Dorsolateral prefrontal cortex (tissue), 120 donors: ENCODE measurements at regions of chr12 and their contacts with region 1.

Region 1: DNA sequence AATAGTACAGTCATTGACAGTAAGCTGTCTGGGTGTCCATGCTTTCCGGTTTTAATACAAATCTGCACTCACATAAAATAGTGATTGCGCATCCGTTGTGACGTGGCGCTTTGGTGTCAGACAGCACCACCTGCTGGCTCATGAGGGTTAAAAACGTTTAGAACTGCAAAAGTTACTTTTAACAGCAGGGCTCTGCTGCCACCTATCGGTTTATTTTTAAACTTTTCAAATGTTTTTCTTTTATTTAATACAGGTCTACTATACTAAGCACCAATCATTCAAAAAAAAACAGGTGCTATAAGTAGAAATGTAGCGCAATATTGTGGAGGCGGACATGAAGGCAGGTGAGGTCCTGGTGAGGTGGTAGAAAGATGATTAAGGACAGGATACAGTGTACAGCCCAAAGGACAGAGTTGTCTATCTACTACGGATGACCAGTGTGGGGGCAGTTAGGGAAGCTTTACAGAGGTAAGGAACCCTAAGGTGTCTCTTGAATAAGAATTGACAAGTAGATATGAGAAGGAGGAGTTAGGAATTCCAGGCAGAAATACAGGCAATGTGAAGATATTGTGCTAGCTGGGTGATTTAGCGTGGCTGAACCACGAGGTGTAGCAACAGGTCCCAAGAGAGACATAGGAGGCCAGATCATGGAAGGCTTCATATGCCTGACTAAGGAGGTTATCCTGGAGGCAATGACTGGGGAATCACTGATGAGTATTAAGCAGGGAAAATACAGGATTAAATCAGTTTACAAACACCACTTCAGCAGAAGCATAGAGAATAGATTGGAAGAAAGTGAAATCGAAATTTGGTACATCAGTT is 91.5 kb upstream of the PRB2 start:
- DNase-seq: peak; percentile 41 to 80 (median 66)
- H3K4me3 ChIP-seq: peak overlapping the region in 25 of 59 donors; percentile 1 to 50 (median 28)
- H3K27ac ChIP-seq: no peak overlapping the region
- H3K27me3 ChIP-seq: no peaks in the 10 kb centered on the region
- CTCF ChIP-seq: peak; percentile 94 to 100 (median 99)

Region 2: DNA sequence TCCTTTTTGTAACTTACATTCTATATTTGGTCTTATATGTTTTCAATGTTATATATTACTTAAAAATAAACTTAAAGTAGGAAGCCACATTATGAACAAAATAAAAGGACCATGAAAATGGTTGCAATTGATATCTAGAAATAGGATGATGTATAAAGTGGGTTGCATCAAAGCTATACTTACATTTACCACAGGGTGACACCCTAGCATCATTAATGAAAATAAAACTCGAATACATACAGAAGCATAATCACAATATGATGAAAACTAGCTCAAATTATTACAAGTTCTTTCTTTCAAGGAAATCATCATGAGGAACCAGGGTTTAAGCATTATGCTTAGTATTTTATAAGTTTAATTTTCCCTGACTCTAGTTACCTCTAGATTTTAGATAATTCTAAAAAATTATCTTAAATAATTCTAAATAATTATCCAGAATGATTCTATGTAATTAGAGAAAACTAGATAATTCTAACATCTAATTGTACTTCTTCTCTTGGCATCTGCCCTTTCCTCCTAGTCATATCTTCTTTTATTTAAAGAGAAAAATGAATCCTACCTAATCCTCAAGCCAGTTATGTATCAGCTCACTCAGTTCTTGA is 715.6 kb before region 1 on chr12:
- intact Hi-C with region 1: loop called (anchors 5 to 10 kb)
- DNase-seq: no peak
- H3K4me3 ChIP-seq: no peak overlapping the region
- H3K27ac ChIP-seq: no peak overlapping the region
- H3K27me3 ChIP-seq: peaks cover 0 to 23% (median 0%) of the 10 kb centered on the region in 45 donors
- CTCF ChIP-seq: peak; percentile 53 to 90 (median 72)

Region 3: GRCh38 chr12:10959804-10960203 is 527.0 kb before region 1 on chr12:
- intact Hi-C with region 1: loop called (anchors 5 to 10 kb)
- DNase-seq: peak in 2 of 10 donors; percentile 26 to 33
- H3K4me3 ChIP-seq: no peak overlapping the region
- H3K27ac ChIP-seq: peak overlapping the region in 2 of 59 donors; percentile 0 to 16
- H3K27me3 ChIP-seq: no peaks in the 10 kb centered on the region
- CTCF ChIP-seq: peak in 50 of 56 donors; percentile 18 to 77 (median 47)

Region 4: DNA sequence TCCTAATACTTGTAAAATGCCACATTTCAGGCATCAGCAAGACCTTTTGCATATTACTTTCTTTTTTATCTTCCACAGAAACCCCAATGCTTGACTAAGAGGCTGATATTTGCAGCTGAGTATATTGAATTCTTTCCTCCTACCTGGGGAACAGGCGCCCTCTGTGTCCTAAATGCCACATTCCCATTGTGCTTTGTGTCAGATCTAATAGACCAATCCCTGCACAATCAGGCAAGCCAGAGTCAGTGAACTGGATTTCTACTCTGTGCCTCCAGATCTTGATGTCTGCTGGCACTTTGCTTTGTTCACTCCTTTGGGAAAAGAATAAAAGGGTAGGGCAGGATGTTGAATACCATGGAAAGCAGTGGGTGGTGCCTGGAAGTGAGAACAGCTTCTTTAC is 277.7 kb before region 1 on chr12:
- intact Hi-C with region 1: loop called in 1 of 2 experiments (anchors 10 kb)
- DNase-seq: no peak
- H3K4me3 ChIP-seq: no peak overlapping the region
- H3K27ac ChIP-seq: no peak overlapping the region
- H3K27me3 ChIP-seq: no peaks in the 10 kb centered on the region
- CTCF ChIP-seq: no peak